ENCODE measurements at regions of chr15 and their contacts with region 1.

Region 1: GRCh38 chr15:30073915-30074314 is 8.8 kb upstream of the GOLGA8J start:
- DNase-seq: no peak
- H3K4me3 ChIP-seq: no peak overlapping the region
- H3K27ac ChIP-seq: no peak overlapping the region
- H3K27me3 ChIP-seq: no peaks in the 10 kb centered on the region
- CTCF ChIP-seq: no peak

Region 2: GRCh38 chr15:29925227-29926082 is 148.5 kb before region 1 on chr15:
- in situ Hi-C with region 1: loop called (anchors 25 kb)
- DNase-seq: peak; percentile 86
- H3K4me3 ChIP-seq: no peak overlapping the region
- H3K27ac ChIP-seq: peak overlapping the region; percentile 68
- H3K27me3 ChIP-seq: no peaks in the 10 kb centered on the region
- CTCF ChIP-seq: peak; percentile 100